ENCODE measurements at regions of chr10 and their contacts with region 1.

Region 1: GRCh38 chr10:117174439-117175214 is 22.7 kb upstream of the KCNK18 start:
- DNase-seq: peak; percentile 89
- H3K4me3 Mint-ChIP-seq: peak overlapping the region; percentile 71
- H3K27ac Mint-ChIP-seq: no peak overlapping the region
- H3K4me1 Mint-ChIP-seq: no peaks in the 10 kb centered on the region
- H3K27me3 Mint-ChIP-seq: peaks cover 33% of the 10 kb centered on the region
- CTCF ChIP-seq: peak; percentile 78

Region 2: DNA sequence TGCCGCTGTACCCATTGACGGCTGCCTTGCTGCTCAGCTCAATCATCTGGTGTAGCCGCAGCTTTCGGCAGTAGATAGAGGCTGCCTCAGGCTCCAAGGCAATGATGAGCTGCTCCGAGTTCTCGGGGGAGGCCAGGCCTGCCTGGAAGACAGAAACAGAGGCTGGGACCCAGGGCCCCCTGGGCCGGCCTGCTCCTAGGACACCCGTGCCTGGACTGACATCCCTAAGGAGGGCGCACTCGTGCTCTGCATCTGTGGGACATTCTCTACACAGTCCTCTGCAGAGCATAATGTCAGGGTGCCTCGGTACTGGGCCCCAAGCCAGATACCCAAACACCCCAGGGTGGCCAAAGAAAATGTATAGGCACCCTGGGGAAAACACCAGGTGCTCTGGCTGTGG is 490.8 kb before region 1 on chr10:
- CTCF ChIA-PET with region 1: interaction called, 16 read pairs
- POLR2A ChIA-PET with region 1: no interaction called
- intact Hi-C with region 1: loop called (anchors 1 kb)
- DNase-seq: no peak
- H3K4me3 Mint-ChIP-seq: no peak overlapping the region
- H3K27ac Mint-ChIP-seq: no peak overlapping the region
- H3K4me1 Mint-ChIP-seq: peaks cover 6% of the 10 kb centered on the region
- H3K27me3 Mint-ChIP-seq: no peaks in the 10 kb centered on the region
- CTCF ChIP-seq: no peak

Region 3: GRCh38 chr10:116796910-116797513 is 377.6 kb before region 1 on chr10:
- CTCF ChIA-PET with region 1: interaction called, 578 read pairs
- POLR2A ChIA-PET with region 1: interaction called, 25 read pairs
- intact Hi-C with region 1: loop called (anchors 1 kb)
- DNase-seq: peak; percentile 78
- H3K4me3 Mint-ChIP-seq: no peak overlapping the region
- H3K27ac Mint-ChIP-seq: no peak overlapping the region
- H3K4me1 Mint-ChIP-seq: no peaks in the 10 kb centered on the region
- H3K27me3 Mint-ChIP-seq: no peaks in the 10 kb centered on the region
- CTCF ChIP-seq: peak; percentile 96

Region 4: DNA sequence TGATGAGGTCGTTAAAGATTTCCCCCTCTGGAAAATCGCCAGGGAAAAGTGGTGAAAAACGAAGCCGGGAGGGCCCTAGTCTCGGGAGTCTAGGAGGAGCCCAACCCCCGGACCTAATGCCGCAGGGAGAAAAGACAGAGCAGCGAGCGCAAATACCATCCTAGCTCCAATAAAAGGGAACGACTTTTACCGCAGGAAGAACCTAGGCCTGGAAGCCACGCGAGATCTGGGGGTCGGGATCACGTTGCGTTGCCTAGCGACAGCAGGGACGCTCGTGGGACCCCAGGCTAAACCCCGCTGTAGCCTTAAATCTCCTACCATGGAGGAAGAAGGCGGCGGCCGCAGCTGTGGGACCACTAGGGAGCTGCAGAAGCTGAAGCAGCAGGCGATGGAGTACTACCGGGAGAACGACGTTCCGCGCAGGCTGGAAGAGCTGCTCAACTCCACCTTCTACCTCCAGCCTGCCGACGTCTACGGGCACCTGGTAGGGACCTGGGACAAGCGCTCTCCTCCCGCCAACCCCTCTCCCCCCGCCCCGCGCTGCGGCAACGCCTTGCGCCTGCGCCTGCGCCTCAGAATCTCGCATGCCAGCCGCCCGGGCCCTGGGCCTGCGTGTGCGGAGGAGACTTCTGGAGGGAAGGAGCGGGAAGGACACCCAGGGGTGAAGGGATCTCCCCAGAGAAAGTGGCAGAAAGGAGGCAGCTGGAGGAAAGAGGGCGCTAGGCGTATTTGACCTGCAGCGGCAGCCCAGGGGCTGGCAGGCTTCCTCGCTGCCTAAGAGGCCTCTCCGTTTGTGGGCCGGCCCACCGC is 325.2 kb before region 1 on chr10 and contains the start of gene ENO4:
- CTCF ChIA-PET with region 1: interaction called, 11 read pairs
- POLR2A ChIA-PET with region 1: no interaction called
- intact Hi-C with region 1: no loop called
- DNase-seq: peak; percentile 89
- H3K4me3 Mint-ChIP-seq: peak within 1 kb of the TSS; percentile 90
- H3K27ac Mint-ChIP-seq: peak within 1 kb of the TSS; percentile 95
- H3K4me1 Mint-ChIP-seq: peaks cover 29% of the 10 kb centered on the region
- H3K27me3 Mint-ChIP-seq: no peaks in the 10 kb centered on the region
- CTCF ChIP-seq: no peak
- total RNA-seq, gene ENO4: 0.15 TPM in 1 of 2 replicates, not detected in the other

Region 5: GRCh38 chr10:117074621-117075020 is 100.0 kb before region 1 on chr10:
- CTCF ChIA-PET with region 1: interaction called, 4 read pairs
- POLR2A ChIA-PET with region 1: no interaction called
- intact Hi-C with region 1: loop called (anchors 10 kb)
- DNase-seq: peak; percentile 52
- H3K4me3 Mint-ChIP-seq: no peak overlapping the region
- H3K27ac Mint-ChIP-seq: no peak overlapping the region
- H3K4me1 Mint-ChIP-seq: peaks cover 8% of the 10 kb centered on the region
- H3K27me3 Mint-ChIP-seq: no peaks in the 10 kb centered on the region
- CTCF ChIP-seq: peak; percentile 33

Region 6: DNA sequence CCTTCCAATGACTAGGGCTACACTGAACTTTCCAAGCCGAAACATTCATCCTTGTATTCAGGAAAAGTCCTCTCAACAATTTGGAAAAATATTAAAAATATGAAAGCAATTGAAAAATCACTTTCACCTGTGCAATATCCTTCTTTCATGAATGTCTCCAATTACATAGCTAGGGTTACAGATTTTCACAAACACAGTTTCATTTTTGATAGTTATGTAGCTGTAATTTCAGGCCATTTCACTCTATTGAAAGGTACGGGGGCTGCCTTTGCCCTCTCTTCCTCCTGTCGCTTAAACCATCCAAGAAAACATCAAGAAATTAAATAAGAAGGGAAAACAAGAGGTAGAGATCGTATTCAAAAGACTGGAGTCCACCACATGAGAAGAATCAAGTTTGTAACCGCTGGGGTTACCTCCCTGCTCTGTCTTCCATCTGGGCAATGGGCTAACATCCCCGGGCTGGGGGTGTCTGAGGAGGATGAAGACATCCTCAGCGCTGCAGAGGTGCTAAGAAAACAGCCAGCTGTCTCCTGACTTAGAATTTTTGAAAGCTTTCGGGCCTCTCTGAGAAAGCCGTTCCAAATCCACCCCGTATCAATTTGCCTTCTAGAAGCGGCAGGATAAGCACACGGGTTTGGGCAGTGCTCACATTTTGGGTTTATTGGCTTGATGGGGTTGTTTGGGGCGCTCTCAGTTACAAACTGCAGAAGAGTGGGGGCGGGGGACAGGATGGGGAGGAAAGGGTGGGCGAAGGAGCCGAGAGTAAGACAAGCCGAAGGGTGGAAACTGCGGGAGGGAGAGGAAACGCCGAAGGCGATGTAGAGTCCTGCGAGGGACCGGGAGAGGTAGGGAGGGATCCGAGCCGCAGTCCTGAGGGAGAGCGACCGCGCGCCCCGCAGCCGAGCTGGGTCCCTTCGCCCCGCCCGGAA is 12.3 kb before region 1 on chr10:
- CTCF ChIA-PET with region 1: interaction called, 27 read pairs
- POLR2A ChIA-PET with region 1: no interaction called
- intact Hi-C with region 1: no loop called
- DNase-seq: no peak
- H3K4me3 Mint-ChIP-seq: no peak overlapping the region
- H3K27ac Mint-ChIP-seq: no peak overlapping the region
- H3K4me1 Mint-ChIP-seq: peaks cover 6% of the 10 kb centered on the region
- H3K27me3 Mint-ChIP-seq: peaks cover 60% of the 10 kb centered on the region
- CTCF ChIP-seq: no peak

Region 7: GRCh38 chr10:117350909-117351308 is 176.3 kb after region 1 on chr10:
- CTCF ChIA-PET with region 1: no interaction called
- POLR2A ChIA-PET with region 1: no interaction called
- intact Hi-C with region 1: no loop called
- DNase-seq: no peak
- H3K4me3 Mint-ChIP-seq: no peak overlapping the region
- H3K27ac Mint-ChIP-seq: no peak overlapping the region
- H3K4me1 Mint-ChIP-seq: peaks cover 22% of the 10 kb centered on the region
- H3K27me3 Mint-ChIP-seq: no peaks in the 10 kb centered on the region
- CTCF ChIP-seq: no peak

Measured in MCF 10A (cell line).